Naive thymus-derived CD4-positive, alpha-beta T cell (primary cell): ENCODE measurements at regions of chr9 and their contacts with region 1.

Region 1: GRCh38 chr9:93134015-93134739 is at the start of gene NINJ1:
- DNase-seq: peak; percentile 72 to 93 (median 83)
- ATAC-seq: peak; percentile 87
- H3K4me3 ChIP-seq: peak within 1 kb of the TSS; percentile 68
- H3K4me3 Mint-ChIP-seq: peak within 1 kb of the TSS; percentile 87 to 92 (median 90)
- H3K27ac ChIP-seq: peak within 1 kb of the TSS; percentile 99
- H3K27ac Mint-ChIP-seq: peak within 1 kb of the TSS; percentile 84 to 98 (median 98)
- H3K4me1 ChIP-seq: peaks cover 27 to 55% of the 10 kb centered on the region in 2 donors
- H3K4me1 Mint-ChIP-seq: peaks cover 40 to 80% (median 63%) of the 10 kb centered on the region in 7 donors
- H3K27me3 ChIP-seq: no peaks in the 10 kb centered on the region
- H3K27me3 Mint-ChIP-seq: no peaks in the 10 kb centered on the region
- total RNA-seq, gene NINJ1: 30.7 to 163 (median 64.7) TPM

Region 2: DNA sequence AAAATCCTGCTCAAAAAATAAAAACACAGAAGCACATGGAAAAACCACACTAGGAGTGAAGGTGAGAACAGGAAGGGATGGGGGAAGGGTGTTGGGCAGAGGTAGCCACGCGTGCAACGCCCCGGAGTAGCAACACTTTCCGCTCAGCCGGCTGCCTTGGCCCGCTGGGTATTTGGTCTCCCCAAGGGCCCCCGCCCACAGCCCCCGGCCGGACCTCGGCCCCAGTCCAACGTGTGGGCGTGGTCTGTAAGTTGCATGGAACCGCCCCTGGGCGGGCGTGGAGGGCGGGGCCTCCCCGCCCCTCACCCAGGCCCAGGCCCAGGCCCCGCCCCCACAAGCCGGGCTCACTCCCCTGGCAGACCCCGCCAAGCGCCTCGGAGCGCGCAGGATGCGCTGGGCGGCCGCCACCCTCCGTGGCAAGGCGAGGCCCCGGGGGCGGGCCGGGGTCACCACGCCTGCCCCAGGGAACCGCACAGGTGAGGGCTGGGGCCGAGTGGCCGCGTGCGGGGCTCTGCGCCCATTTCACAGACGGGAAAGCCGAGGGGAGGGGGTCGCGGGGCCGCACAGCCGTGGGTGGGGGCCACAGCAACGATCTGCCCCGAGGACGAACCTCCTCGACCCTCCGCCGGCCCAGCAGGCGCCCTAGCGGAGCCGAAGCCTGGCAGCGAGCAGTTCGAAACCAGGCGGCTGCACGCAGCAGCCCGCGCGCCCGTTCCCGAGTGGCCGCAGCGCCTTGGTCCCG is 75.7 kb before region 1 on chr9 and contains the start of gene SUSD3:
- CTCF ChIA-PET with region 1: no interaction called
- POLR2A ChIA-PET with region 1: interaction called, 3 read pairs
- intact Hi-C with region 1: loop called in 1 of 2 experiments (anchors 2 kb)
- DNase-seq: peak; percentile 47 to 82 (median 65)
- ATAC-seq: peak; percentile 81
- H3K4me3 ChIP-seq: peak within 1 kb of the TSS; percentile 90
- H3K4me3 Mint-ChIP-seq: peak within 1 kb of the TSS; percentile 93 to 97 (median 94)
- H3K27ac ChIP-seq: peak within 1 kb of the TSS; percentile 88
- H3K27ac Mint-ChIP-seq: peak within 1 kb of the TSS; percentile 97 to 100 (median 99)
- H3K4me1 ChIP-seq: peaks cover 52 to 56% of the 10 kb centered on the region in 2 donors
- H3K4me1 Mint-ChIP-seq: peaks cover 31 to 78% (median 65%) of the 10 kb centered on the region in 7 donors
- H3K27me3 ChIP-seq: no peaks in the 10 kb centered on the region
- H3K27me3 Mint-ChIP-seq: no peaks in the 10 kb centered on the region
- total RNA-seq, gene SUSD3: 62.8 to 83.5 (median 68.7) TPM

Region 3: GRCh38 chr9:93064392-93065134 is 69.6 kb before region 1 on chr9:
- CTCF ChIA-PET with region 1: no interaction called
- POLR2A ChIA-PET with region 1: interaction called, 4 read pairs
- intact Hi-C with region 1: loop called (anchors 1 kb)
- DNase-seq: peak; percentile 54 to 95 (median 90)
- ATAC-seq: peak; percentile 96
- H3K4me3 ChIP-seq: peak overlapping the region; percentile 90
- H3K4me3 Mint-ChIP-seq: peak overlapping the region; percentile 87 to 97 (median 92)
- H3K27ac ChIP-seq: peak overlapping the region; percentile 88
- H3K27ac Mint-ChIP-seq: peak overlapping the region; percentile 97 to 100 (median 99)
- H3K4me1 ChIP-seq: peaks cover 63 to 87% of the 10 kb centered on the region in 2 donors
- H3K4me1 Mint-ChIP-seq: peaks cover 71 to 95% (median 86%) of the 10 kb centered on the region in 7 donors
- H3K27me3 ChIP-seq: no peaks in the 10 kb centered on the region
- H3K27me3 Mint-ChIP-seq: no peaks in the 10 kb centered on the region

Region 4: DNA sequence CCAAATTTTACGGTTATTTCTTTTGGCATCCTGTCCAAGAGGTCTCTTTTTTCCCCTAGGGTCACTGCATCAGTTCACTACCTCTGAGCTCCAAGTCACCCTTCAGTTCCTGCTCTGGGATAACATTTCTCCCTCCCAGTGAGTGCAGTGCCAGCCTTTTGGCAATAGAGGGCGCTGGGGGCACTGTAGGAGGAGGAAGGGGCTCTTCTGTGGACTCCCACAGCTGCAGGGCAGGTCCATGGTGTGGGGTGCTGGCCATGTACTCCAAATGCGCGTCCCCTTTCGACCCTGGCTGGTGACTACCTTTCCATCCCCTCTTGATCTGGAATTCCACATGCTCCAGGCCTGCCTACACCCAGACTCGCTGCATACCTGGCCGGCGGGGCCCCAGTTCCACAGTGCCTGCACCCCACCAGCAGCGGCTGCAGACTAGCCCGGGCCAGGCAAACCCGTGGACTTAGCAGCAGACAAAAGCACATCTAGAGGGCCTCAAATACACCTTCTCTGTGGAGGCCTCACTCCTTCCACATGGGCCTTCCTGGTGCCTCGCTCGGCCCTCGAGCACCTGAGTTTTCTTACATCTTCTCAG is 20.2 kb after region 1 on chr9:
- CTCF ChIA-PET with region 1: no interaction called
- POLR2A ChIA-PET with region 1: interaction called, 3 read pairs
- intact Hi-C with region 1: loop called in 1 of 2 experiments (anchors 1 kb)
- DNase-seq: peak in 5 of 9 donors; percentile 34 to 55 (median 41)
- ATAC-seq: peak; percentile 70
- H3K4me3 ChIP-seq: no peak overlapping the region
- H3K4me3 Mint-ChIP-seq: peak overlapping the region in 1 of 10 donors; percentile 7
- H3K27ac ChIP-seq: no peak overlapping the region
- H3K27ac Mint-ChIP-seq: peak overlapping the region in 5 of 9 donors; percentile 17 to 72 (median 25)
- H3K4me1 ChIP-seq: peaks cover 0 to 1% of the 10 kb centered on the region in 2 donors
- H3K4me1 Mint-ChIP-seq: peaks cover 2 to 38% (median 8%) of the 10 kb centered on the region in 7 donors
- H3K27me3 ChIP-seq: no peaks in the 10 kb centered on the region
- H3K27me3 Mint-ChIP-seq: no peaks in the 10 kb centered on the region

Region 5: GRCh38 chr9:93612796-93613154 is 478.6 kb after region 1 on chr9:
- CTCF ChIA-PET with region 1: no interaction called
- POLR2A ChIA-PET with region 1: no interaction called
- intact Hi-C with region 1: no loop called
- DNase-seq: no peak
- ATAC-seq: no peak
- H3K4me3 ChIP-seq: no peak overlapping the region
- H3K4me3 Mint-ChIP-seq: no peak overlapping the region
- H3K27ac ChIP-seq: no peak overlapping the region
- H3K27ac Mint-ChIP-seq: no peak overlapping the region
- H3K4me1 ChIP-seq: peaks cover 0 to 4% of the 10 kb centered on the region in 2 donors
- H3K4me1 Mint-ChIP-seq: peaks cover 10 to 43% (median 18%) of the 10 kb centered on the region in 7 donors
- H3K27me3 ChIP-seq: no peaks in the 10 kb centered on the region
- H3K27me3 Mint-ChIP-seq: no peaks in the 10 kb centered on the region